Testis (tissue), 5 donors: ENCODE measurements at regions of chr2 and their contacts with region 1.

Region 1: GRCh38 chr2:10122386-10123280 is at the start of gene RRM2:
- DNase-seq: peak; percentile 97
- H3K4me3 ChIP-seq: peak within 1 kb of the TSS; percentile 54 to 55
- H3K27ac ChIP-seq: no peak within 1 kb of the TSS
- H3K4me1 ChIP-seq: peaks cover 9% of the 10 kb centered on the region
- H3K27me3 ChIP-seq: no peaks in the 10 kb centered on the region
- CTCF ChIP-seq: no peak
- POLR2A ChIP-seq: no peak
- total RNA-seq, gene RRM2: 7.2 to 18.1 TPM

Region 2: GRCh38 chr2:10408649-10409579 is 286.3 kb after region 1 on chr2:
- intact Hi-C with region 1: loop called (anchors 10 kb)
- DNase-seq: peak; percentile 90
- H3K4me3 ChIP-seq: no peak overlapping the region
- H3K27ac ChIP-seq: peak overlapping the region; percentile 9 to 28
- H3K4me1 ChIP-seq: peaks cover 55% of the 10 kb centered on the region
- H3K27me3 ChIP-seq: no peaks in the 10 kb centered on the region
- CTCF ChIP-seq: peak; percentile 86 to 94 (median 91)
- POLR2A ChIP-seq: no peak

Region 3: DNA sequence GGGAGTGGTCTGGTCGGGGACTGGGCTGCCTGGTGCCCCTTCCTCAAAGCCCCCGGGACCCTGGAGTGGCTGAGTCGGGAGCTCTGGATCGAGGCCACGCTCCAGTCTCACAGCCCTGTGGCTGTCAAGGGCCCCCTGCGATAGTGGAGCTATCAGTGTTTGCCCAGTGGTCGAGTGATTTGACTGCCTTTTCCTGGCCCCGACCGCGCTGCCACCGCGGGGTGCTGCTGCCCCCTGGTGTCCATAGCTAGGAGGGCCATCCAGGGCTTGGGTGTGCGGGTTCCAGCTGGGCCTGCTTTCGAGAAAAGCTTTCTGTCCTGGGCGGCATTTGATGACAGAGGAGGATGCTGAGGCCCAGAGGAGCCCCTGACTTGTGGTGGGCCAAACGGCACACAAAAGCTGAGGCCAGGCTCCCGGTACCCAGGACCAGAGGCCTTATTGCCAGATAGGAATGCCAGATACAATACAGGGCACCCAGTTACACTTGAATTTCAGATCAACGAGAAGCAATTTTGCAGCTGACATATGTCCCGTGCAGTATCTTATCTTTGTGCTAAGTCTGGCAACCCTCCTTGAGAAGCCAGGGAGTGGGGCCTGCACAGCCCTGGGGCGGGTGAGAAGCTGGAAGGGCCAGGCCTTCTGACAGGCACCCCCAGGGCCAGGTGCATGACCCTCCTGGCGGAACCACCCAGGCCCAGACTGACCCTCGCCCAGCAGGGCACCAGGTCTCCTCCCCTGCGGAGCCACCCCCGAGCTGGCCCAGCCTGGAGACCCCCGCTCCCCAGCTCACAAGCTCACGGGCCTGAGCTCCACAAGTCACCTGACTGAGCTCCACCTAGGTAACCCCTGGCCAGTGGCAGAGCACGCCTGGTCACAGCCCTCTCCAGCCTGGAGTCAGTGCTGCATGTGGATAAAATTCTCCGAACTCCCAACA is 312.5 kb after region 1 on chr2:
- intact Hi-C with region 1: loop called (anchors 5 kb)
- DNase-seq: peak; percentile 70
- H3K4me3 ChIP-seq: no peak overlapping the region
- H3K27ac ChIP-seq: no peak overlapping the region
- H3K4me1 ChIP-seq: peaks cover 15% of the 10 kb centered on the region
- H3K27me3 ChIP-seq: no peaks in the 10 kb centered on the region
- CTCF ChIP-seq: peak; percentile 94 to 97 (median 95)
- POLR2A ChIP-seq: no peak